B cell (primary cell): ENCODE measurements at regions of chr1 and their contacts with region 1.

Region 1: DNA sequence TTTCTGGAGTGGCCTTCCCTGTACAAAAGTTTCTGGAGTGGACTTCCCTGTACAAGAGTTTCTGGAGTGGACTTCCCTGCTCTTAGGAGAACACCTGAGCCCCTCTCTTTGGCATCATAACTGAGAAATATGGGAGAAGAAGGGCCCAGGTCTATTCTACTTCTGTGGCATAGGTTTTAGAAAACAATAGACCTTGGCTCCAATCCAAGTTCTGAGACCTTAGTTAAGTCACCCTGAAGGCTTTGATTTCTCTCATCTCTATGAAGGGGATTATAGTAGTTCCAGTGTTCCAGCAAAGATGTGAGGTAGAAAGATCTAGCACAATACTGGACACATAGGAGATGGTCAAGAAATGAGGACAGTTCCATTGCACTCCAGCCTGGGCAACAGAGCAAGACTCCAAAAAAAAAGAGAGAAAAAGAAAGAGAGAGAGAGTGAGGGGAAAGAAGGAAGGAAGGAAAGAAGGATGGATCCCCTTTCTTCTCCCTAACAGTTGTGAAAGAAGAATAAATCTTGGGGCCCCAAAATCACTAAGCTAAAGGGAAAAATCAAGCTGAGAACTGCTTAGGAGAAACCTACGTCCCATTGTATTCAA is 13.3 kb upstream of the EIF4G3 start:
- DNase-seq: no peak
- ATAC-seq: no peak
- H3K4me3 ChIP-seq: no peak overlapping the region
- H3K4me3 Mint-ChIP-seq: no peak overlapping the region
- H3K27ac ChIP-seq: no peak overlapping the region
- H3K27ac Mint-ChIP-seq: no peak overlapping the region
- H3K4me1 ChIP-seq: peaks cover 4 to 9% of the 10 kb centered on the region in 2 donors
- H3K4me1 Mint-ChIP-seq: peaks cover 2% of the 10 kb centered on the region
- H3K27me3 ChIP-seq: no peaks in the 10 kb centered on the region
- H3K27me3 Mint-ChIP-seq: peaks cover 8% of the 10 kb centered on the region
- CTCF ChIP-seq: no peak

Region 2: DNA sequence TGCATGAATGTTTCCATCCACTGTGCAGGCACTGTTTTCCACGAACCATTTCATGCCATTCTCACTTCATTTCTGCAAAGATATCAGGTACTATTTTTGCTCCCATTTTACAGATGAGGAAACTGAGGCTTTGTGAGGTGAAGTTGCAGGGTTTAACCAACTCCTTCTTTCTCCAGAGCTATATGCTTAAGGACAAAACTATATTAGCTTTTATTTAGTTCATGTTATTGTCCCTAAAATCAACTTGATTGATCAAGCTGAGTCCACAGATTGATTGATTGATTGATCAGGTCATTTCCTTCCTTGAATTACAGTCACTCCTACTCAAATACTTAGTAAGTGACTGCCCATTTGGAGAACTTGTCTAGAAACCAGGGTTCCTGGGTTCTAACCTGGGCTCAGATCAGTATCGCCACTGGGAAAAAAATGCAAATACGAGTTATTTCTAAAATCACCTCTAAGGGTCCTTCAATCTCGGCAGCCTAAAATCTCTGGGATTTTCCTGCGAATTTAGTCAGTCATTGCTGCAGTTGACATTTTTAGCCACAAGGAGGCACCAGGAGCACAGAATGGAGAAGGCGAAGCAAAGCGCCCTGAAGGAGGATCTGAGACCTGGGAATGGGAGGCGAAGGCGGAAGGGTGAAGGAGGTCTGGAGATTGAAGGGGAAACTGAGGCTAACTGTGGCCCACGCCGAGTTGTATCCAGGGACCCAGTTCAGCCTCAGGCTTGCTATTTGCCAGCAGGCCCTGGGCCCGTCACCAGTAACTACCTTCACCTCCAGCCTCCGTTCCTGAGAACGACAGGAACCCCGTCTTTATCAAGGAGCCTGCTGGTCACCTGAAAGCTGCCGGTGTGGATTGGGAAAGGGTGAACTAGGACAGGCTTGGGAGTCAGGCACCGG is 667.8 kb before region 1 on chr1:
- CTCF ChIA-PET with region 1: interaction called, 6 read pairs
- POLR2A ChIA-PET with region 1: no interaction called
- intact Hi-C with region 1: loop called (anchors 10 kb)
- DNase-seq: peak; percentile 75
- ATAC-seq: peak; percentile 17
- H3K4me3 ChIP-seq: no peak overlapping the region
- H3K4me3 Mint-ChIP-seq: no peak overlapping the region
- H3K27ac ChIP-seq: no peak overlapping the region
- H3K27ac Mint-ChIP-seq: no peak overlapping the region
- H3K4me1 ChIP-seq: peaks cover 0 to 3% of the 10 kb centered on the region in 2 donors
- H3K4me1 Mint-ChIP-seq: no peaks in the 10 kb centered on the region
- H3K27me3 ChIP-seq: peaks cover 0 to 9% (median 0%) of the 10 kb centered on the region in 4 experiments
- H3K27me3 Mint-ChIP-seq: peaks cover 28% of the 10 kb centered on the region
- CTCF ChIP-seq: peak; percentile 87

Region 3: DNA sequence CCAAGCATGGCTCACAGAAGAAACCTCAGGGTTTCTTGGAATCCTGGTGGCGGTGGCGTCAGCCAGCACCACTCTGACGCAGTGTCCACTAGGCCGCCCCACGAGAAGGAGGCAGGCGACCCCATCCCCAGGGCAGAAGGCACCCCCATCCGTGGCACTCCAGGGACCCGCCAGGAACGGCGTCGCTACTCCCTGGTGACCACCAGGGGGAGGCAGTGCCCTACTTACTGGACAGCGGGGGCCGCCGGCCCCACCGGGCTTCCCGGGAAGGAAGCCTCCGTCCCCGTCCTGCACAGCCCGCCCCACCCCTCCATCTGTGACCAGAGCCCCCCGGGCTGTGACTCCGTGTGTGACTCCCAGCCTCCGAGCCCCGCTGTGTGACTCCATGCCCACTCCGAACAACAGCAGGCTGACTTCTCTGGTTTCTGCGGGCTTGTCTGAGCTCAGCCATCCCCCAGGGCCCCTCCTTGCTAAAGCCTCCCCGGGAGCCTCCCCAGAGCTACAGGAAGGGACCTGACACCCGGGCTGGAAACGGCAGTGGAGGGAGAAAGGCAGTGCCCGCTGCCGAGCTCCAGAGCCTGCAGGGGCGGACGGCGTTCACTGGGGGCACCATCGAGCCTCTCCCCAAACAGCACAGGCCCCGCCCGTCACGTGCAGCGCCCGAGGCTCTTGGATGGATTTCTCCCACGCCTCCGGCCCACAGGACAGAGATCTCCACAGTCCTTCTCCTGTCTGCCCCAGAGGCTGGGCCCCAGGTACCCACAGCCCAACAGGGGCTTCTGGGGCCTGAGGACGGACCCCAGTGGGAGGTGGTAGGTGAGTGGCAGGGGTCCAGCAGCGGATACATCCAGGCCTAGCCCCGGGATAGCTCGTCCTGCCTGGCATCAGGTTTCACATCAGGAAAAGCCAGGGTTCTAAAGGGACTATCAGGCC is 493.3 kb before region 1 on chr1:
- CTCF ChIA-PET with region 1: interaction called, 130 read pairs
- POLR2A ChIA-PET with region 1: no interaction called
- intact Hi-C with region 1: no loop called
- DNase-seq: peak; percentile 83
- ATAC-seq: peak; percentile 94
- H3K4me3 ChIP-seq: peak overlapping the region; percentile 42 to 82 (median 79)
- H3K4me3 Mint-ChIP-seq: peak overlapping the region; percentile 91
- H3K27ac ChIP-seq: no peak overlapping the region
- H3K27ac Mint-ChIP-seq: no peak overlapping the region
- H3K4me1 ChIP-seq: peaks cover 0 to 8% of the 10 kb centered on the region in 2 donors
- H3K4me1 Mint-ChIP-seq: peaks cover 4% of the 10 kb centered on the region
- H3K27me3 ChIP-seq: no peaks in the 10 kb centered on the region
- H3K27me3 Mint-ChIP-seq: no peaks in the 10 kb centered on the region
- CTCF ChIP-seq: peak; percentile 98

Region 4: DNA sequence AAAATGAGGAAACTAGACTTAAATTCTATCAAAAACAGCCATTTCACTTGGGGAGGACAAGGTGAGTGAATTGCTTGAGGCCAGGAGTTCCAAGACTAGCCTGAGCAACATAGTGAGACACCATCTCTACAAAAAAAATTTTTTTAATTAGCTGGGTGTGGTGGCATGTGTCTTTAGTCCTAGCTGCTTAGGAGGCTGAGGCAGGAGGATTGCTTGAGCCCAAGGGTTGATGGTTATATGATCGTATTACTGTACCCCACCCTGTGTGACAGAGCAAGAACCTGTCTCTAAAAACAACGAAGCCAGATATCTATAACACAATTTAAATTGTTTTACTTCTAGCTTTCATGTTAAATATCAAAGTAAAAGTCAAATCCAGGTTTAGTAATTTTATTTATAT is 276.8 kb before region 1 on chr1:
- CTCF ChIA-PET with region 1: interaction called, 10 read pairs
- POLR2A ChIA-PET with region 1: interaction called, 3 read pairs
- intact Hi-C with region 1: no loop called
- DNase-seq: no peak
- ATAC-seq: no peak
- H3K4me3 ChIP-seq: no peak overlapping the region
- H3K4me3 Mint-ChIP-seq: no peak overlapping the region
- H3K27ac ChIP-seq: no peak overlapping the region
- H3K27ac Mint-ChIP-seq: no peak overlapping the region
- H3K4me1 ChIP-seq: no peaks in the 10 kb centered on the region
- H3K4me1 Mint-ChIP-seq: no peaks in the 10 kb centered on the region
- H3K27me3 ChIP-seq: no peaks in the 10 kb centered on the region
- H3K27me3 Mint-ChIP-seq: no peaks in the 10 kb centered on the region
- CTCF ChIP-seq: no peak

Region 5: DNA sequence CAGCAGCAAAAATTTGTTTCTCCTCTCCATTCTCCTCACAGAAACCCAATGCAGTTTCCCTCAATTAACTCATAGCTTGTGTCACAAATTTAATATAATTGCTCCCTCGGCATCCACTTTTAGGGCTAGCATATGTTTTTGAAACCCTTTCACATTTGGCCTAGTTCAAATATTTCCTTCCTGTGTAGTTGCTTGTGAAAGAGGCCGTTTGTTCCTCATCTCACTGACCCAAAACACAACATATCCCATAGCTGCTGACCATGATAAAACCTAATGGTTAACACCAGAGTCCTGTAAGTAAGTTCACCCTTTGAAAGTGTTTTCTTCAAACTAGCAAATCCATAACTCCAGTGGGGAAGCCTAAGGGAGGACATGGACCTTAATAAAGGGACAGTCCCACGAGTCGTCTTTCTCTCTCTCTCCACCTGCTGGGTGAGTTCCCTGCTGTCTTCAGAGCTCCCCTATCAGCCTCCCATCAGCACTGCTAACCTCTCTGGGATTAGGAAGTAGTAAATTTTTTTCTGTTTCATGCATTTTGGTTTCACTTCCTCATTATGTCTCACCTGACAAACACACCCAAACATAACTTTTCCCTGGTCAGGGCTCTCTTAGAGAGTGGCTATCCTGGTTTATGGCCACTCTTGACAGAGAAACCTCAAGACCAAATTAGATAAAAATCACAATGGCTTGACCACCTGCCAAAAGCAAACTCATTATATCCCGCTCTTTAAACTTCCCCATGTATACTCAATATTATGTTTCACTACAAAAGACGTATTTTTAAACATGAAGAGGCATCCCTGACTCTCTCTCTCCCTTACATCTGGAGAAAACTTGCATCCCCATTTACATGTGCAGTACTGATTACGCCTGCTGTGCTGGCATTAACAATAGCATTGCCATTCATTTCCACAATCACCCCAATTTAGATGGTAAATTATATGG is 225.2 kb before region 1 on chr1:
- CTCF ChIA-PET with region 1: interaction called, 10 read pairs
- POLR2A ChIA-PET with region 1: no interaction called
- intact Hi-C with region 1: no loop called
- DNase-seq: peak; percentile 82
- ATAC-seq: peak; percentile 95
- H3K4me3 ChIP-seq: peak overlapping the region in 2 of 5 experiments; percentile 14 to 16
- H3K4me3 Mint-ChIP-seq: peak overlapping the region; percentile 46
- H3K27ac ChIP-seq: peak overlapping the region; percentile 55 to 64
- H3K27ac Mint-ChIP-seq: peak overlapping the region; percentile 81
- H3K4me1 ChIP-seq: peaks cover 18 to 19% of the 10 kb centered on the region in 2 donors
- H3K4me1 Mint-ChIP-seq: peaks cover 28% of the 10 kb centered on the region
- H3K27me3 ChIP-seq: no peaks in the 10 kb centered on the region
- H3K27me3 Mint-ChIP-seq: no peaks in the 10 kb centered on the region
- CTCF ChIP-seq: no peak

Region 6: DNA sequence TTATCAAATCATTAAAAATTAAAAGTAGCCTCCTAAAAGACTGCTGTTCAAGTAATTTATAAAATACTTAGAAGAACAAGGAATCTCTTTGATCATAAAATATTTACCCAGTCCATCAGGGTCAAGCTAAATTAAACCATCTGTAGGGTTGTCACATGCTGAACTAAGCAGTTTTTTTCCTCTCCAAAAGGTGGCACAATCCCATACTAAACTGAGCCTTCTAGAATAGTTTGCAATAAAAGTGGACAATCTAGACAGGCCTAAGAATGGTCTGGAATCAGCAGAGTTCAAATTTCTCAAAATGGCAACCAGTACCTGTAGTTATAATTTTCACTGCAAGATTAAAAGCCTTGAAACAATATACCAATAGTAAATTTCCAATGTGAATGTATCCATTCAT is 208.1 kb before region 1 on chr1:
- CTCF ChIA-PET with region 1: interaction called, 94 read pairs
- POLR2A ChIA-PET with region 1: no interaction called
- intact Hi-C with region 1: loop called (anchors 1 kb)
- DNase-seq: no peak
- ATAC-seq: no peak
- H3K4me3 ChIP-seq: no peak overlapping the region
- H3K4me3 Mint-ChIP-seq: no peak overlapping the region
- H3K27ac ChIP-seq: peak overlapping the region in 1 of 2 donors; percentile 41
- H3K27ac Mint-ChIP-seq: no peak overlapping the region
- H3K4me1 ChIP-seq: no peaks in the 10 kb centered on the region
- H3K4me1 Mint-ChIP-seq: no peaks in the 10 kb centered on the region
- H3K27me3 ChIP-seq: no peaks in the 10 kb centered on the region
- H3K27me3 Mint-ChIP-seq: no peaks in the 10 kb centered on the region
- CTCF ChIP-seq: no peak

Region 7: GRCh38 chr1:21117597-21118001 is 72.4 kb before region 1 on chr1:
- CTCF ChIA-PET with region 1: interaction called, 11 read pairs
- POLR2A ChIA-PET with region 1: no interaction called
- intact Hi-C with region 1: no loop called
- DNase-seq: no peak
- ATAC-seq: no peak
- H3K4me3 ChIP-seq: no peak overlapping the region
- H3K4me3 Mint-ChIP-seq: no peak overlapping the region
- H3K27ac ChIP-seq: no peak overlapping the region
- H3K27ac Mint-ChIP-seq: no peak overlapping the region
- H3K4me1 ChIP-seq: peaks cover 5 to 8% of the 10 kb centered on the region in 2 donors
- H3K4me1 Mint-ChIP-seq: peaks cover 8% of the 10 kb centered on the region
- H3K27me3 ChIP-seq: no peaks in the 10 kb centered on the region
- H3K27me3 Mint-ChIP-seq: no peaks in the 10 kb centered on the region
- CTCF ChIP-seq: no peak